Spleen (tissue), 13 donors: ENCODE measurements at regions of chr15 and their contacts with region 1.

Region 1: DNA sequence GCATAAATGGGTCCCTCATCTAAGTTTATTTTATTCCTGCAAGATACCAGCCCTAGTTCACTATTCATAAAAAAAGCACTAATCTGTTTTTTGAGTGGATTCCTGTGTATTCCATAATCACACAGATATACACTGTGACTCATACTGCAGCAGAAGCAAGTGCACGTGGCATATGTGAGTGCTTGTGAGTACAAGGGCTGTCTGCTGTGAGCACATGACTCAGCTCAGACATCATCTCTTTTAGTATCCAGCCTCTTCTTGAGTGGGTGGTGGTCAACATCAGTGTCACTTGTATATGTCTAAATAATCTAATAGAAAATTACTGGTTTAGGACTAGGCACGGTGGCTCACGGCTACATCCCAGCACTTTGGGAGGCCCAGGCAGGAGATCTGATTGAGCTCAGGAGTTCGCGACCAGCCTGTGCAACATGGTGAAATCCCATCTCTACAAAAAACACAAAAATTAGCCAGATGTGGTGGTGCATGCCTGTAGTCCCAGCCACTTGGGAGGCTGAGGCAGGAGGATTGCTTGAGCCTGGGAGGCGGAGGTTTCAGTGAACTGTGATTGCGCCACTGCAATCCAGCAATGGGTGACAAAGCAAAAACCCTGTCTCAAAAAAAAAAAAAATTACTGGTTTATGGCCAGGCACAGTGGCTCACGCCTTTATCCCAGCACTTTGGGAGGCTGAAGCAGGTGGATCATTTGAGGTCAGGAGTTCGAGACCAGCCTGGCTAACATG is 49.8 kb downstream of the NIPA2 start:
- DNase-seq: no peak
- H3K4me3 ChIP-seq: no peak overlapping the region
- H3K27ac ChIP-seq: no peak overlapping the region
- H3K4me1 ChIP-seq: no peaks in the 10 kb centered on the region
- H3K27me3 ChIP-seq: no peaks in the 10 kb centered on the region
- CTCF ChIP-seq: no peak
- POLR2A ChIP-seq: no peak

Region 2: DNA sequence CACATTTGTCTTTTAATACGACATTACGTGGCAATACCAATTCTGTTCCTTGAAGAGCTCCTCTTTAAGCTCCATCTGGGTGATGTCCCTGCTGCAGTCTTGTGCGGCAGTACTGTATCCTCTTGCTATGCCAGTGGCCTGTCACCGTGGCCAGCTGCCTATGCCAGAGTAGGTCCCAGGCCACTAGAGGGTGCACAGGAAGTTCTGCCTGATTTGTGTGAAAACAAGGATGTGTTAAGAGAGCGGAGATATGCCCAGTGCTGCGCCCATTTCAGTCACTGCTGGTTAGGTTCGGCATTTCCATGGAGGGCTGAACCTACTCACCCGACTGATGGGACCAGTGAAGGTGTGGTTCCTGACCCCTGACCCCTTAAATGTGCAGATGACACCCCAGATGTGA is 76.7 kb before region 1 on chr15:
- intact Hi-C with region 1: no loop called
- DNase-seq: no peak
- H3K4me3 ChIP-seq: no peak overlapping the region
- H3K27ac ChIP-seq: peak overlapping the region in 2 of 8 donors; percentile 18 to 26
- H3K4me1 ChIP-seq: peaks cover 0 to 10% (median 0%) of the 10 kb centered on the region in 6 donors
- H3K27me3 ChIP-seq: no peaks in the 10 kb centered on the region
- CTCF ChIP-seq: peak in 8 of 11 experiments; percentile 12 to 65 (median 42)
- POLR2A ChIP-seq: no peak

Region 3: GRCh38 chr15:22827125-22827524 is 61.2 kb before region 1 on chr15:
- intact Hi-C with region 1: loop called (anchors 10 kb)
- DNase-seq: no peak
- H3K4me3 ChIP-seq: no peak overlapping the region
- H3K27ac ChIP-seq: no peak overlapping the region
- H3K4me1 ChIP-seq: no peaks in the 10 kb centered on the region
- H3K27me3 ChIP-seq: no peaks in the 10 kb centered on the region
- CTCF ChIP-seq: no peak
- POLR2A ChIP-seq: no peak